GM12878 (cell line): ENCODE measurements at regions of chr4 and their contacts with region 1.

Region 1: DNA sequence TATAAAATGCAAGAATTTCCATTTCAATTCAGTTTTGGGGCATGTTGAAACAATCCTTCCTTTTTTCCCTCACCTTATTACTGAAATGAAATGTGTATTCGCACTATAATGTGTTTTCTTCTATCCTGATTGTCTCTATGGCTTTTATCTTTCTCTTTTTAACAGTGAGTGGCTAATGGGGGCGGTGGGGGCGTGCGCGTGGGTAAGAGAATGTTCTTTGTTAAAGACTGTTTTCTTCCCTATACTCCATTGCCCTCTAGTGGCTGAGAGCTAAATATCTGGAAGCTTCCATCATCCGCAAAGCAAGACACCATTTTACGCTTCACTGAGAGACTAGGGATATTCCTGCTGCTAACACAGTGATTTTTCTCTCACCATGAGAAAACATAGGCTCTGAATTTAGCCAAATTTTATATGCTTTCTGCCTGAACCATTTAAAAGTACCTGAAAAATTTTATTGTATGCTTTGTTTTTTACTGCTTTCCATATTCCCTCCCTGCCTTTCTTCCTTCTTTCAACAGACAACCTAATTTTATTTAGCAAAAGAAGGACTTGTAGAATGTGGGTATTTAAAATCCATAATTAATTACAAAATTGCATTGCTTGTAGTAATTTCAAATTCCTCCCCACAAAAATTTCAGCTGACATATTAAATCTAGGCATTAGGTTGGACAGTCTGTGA is 194.0 kb downstream of the GASK1B start:
- DNase-seq: no peak
- ATAC-seq: peak; percentile 92
- H3K4me3 ChIP-seq: no peak overlapping the region
- H3K27ac ChIP-seq: no peak overlapping the region
- H3K4me1 ChIP-seq: no peaks in the 10 kb centered on the region
- H3K27me3 ChIP-seq: no peaks in the 10 kb centered on the region; a peak in 1 of 4 replicates
- CTCF ChIP-seq: peak; percentile 72 to 83 (median 74)
- EP300 ChIP-seq: no peak
- POLR2A ChIP-seq: no peak
- RAD21 ChIP-seq: peak; percentile 80

Region 2: DNA sequence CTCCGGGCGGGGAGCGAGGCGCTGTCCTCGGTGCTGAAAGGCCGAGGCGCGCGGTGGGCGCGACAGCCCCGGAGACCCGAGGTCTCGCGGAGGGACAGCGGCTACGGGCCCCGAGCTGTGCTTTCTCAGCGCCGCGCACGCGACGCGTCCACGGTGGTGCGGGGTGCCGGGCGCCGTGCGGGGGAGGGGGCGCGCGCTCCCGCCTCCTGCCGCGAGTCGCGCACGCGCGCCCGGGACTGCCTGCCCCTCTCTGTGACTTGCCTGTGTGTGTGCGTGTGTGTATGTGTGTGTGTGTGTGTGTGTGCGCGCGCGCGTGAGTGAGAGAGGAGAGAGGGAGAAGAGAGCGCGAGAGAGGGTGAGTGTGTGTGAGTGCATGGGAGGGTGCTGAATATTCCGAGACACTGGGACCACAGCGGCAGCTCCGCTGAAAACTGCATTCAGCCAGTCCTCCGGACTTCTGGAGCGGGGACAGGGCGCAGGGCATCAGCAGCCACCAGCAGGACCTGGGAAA is 758.4 kb before region 1 on chr4 and contains the start of gene GRIA2:
- CTCF ChIA-PET with region 1: interaction called, 26 read pairs
- POLR2A ChIA-PET with region 1: no interaction called
- RAD21 ChIA-PET with region 1: interaction called, 8 read pairs
- SMC1A ChIA-PET with region 1: interaction called, 16 read pairs
- in situ Hi-C with region 1: loop called (anchors 10 kb)
- intact Hi-C with region 1: loop called (anchors 1 kb)
- DNase-seq: no peak
- ATAC-seq: peak; percentile 54
- H3K4me3 ChIP-seq: no peak within 1 kb of the TSS
- H3K27ac ChIP-seq: no peak within 1 kb of the TSS
- H3K4me1 ChIP-seq: no peaks in the 10 kb centered on the region
- H3K27me3 ChIP-seq: peaks cover 3 to 5% of the 10 kb centered on the region in 2 experiments; a peak in 3 of 4 replicates
- CTCF ChIP-seq: no peak
- EP300 ChIP-seq: no peak
- POLR2A ChIP-seq: no peak
- RAD21 ChIP-seq: no peak
- polyA plus RNA-seq, gene GRIA2: not detected

Region 3: GRCh38 chr4:157514711-157515110 is 464.1 kb before region 1 on chr4:
- CTCF ChIA-PET with region 1: interaction called, 8 read pairs
- POLR2A ChIA-PET with region 1: no interaction called
- RAD21 ChIA-PET with region 1: interaction called, 5 read pairs
- SMC1A ChIA-PET with region 1: no interaction called
- in situ Hi-C with region 1: no loop called
- intact Hi-C with region 1: loop called (anchors 2 kb)
- DNase-seq: no peak
- ATAC-seq: peak; percentile 56
- H3K4me3 ChIP-seq: no peak overlapping the region
- H3K27ac ChIP-seq: no peak overlapping the region
- H3K4me1 ChIP-seq: no peaks in the 10 kb centered on the region
- H3K27me3 ChIP-seq: no peaks in the 10 kb centered on the region
- CTCF ChIP-seq: peak; percentile 15 to 35 (median 24); a peak in 4 of 6 replicates
- EP300 ChIP-seq: no peak
- POLR2A ChIP-seq: no peak
- RAD21 ChIP-seq: no peak